Right lobe of liver (tissue), 6 donors: ENCODE measurements at regions of chr13 and their contacts with region 1.

Region 1: GRCh38 chr13:36858290-36858689 is 39.3 kb downstream of the RFXAP start:
- DNase-seq: no peak
- ATAC-seq: peak; percentile 77 to 92 (median 80)
- H3K4me3 ChIP-seq: no peak overlapping the region
- H3K27ac ChIP-seq: no peak overlapping the region
- H3K4me1 ChIP-seq: no peaks in the 10 kb centered on the region
- H3K27me3 ChIP-seq: no peaks in the 10 kb centered on the region
- CTCF ChIP-seq: peak; percentile 35 to 52 (median 50)
- POLR2A ChIP-seq: no peak

Region 2: GRCh38 chr13:36981156-36981743 is 123.0 kb after region 1 on chr13:
- intact Hi-C with region 1: loop called in 1 of 2 experiments (anchors 10 kb)
- DNase-seq: no peak
- ATAC-seq: peak; percentile 32 to 66 (median 48)
- H3K4me3 ChIP-seq: no peak overlapping the region
- H3K27ac ChIP-seq: no peak overlapping the region
- H3K4me1 ChIP-seq: no peaks in the 10 kb centered on the region
- H3K27me3 ChIP-seq: no peaks in the 10 kb centered on the region
- CTCF ChIP-seq: peak; percentile 43 to 55 (median 48)
- POLR2A ChIP-seq: no peak